Gastrocnemius medialis (tissue), 4 donors: ENCODE measurements at regions of chr6 and their contacts with region 1.

Region 1: DNA sequence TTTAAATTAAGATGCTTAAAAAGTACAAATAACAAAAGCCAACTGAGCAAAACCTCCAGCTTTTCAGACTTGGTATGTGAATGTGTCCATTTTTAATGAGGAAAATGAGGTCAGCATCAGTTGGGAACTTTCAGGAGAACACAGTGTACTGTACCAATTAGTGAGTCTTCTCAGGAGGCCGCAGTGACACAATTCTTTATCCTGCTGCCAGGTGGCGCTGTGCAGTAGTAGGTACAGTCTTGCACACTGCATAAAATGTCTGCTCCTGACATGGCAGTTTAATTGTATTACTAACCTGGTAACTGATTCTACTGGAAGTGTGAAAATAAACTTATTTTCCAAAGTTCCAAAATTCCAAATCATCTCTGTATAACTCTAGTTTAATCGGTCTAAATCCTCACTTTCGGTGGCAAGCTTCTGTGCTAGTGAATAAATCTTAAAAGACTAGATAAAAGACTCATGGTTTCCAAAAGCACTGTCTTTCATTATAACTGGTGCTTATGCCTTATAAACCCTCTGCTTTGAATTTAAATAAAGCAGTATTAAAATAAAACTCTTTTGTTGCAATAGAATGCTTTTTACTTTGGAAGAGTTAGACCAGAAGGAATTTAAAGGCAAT is 214.8 kb upstream of the MMS22L start:
- DNase-seq: peak; percentile 8 to 50
- ATAC-seq: peak; percentile 79 to 93
- H3K4me3 ChIP-seq: no peak overlapping the region
- H3K27ac ChIP-seq: no peak overlapping the region
- H3K4me1 ChIP-seq: peaks cover 0 to 4% of the 10 kb centered on the region in 2 donors
- H3K27me3 ChIP-seq: peaks cover 0 to 2% (median 0%) of the 10 kb centered on the region in 3 donors
- CTCF ChIP-seq: peak; percentile 33 to 78 (median 67)
- POLR2A ChIP-seq: no peak

Region 2: DNA sequence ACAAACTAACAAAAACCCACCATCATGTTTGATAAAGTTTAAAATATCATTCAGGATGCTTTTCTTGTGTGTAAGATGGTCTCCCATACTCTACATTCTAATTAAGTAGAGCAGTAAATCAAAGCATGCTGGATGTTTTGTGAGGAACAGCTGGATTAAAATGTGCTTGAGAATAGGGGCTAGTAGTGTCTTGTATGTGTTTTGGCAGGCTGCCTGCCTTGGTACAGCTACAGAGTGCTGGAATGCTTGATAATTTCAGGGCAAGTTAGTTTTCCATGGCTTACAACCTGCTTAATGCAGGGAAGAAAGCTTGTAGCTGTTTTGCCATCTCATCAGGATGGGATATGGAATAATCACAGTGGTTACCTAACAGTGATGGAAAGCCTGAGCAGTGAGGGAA is 421.8 kb after region 1 on chr6:
- in situ Hi-C with region 1: no loop called
- intact Hi-C with region 1: no loop called
- DNase-seq: no peak
- ATAC-seq: no peak
- H3K4me3 ChIP-seq: no peak overlapping the region
- H3K27ac ChIP-seq: no peak overlapping the region
- H3K4me1 ChIP-seq: no peaks in the 10 kb centered on the region
- H3K27me3 ChIP-seq: no peaks in the 10 kb centered on the region
- CTCF ChIP-seq: no peak
- POLR2A ChIP-seq: no peak

Region 3: GRCh38 chr6:98039869-98040607 is 542.2 kb after region 1 on chr6:
- in situ Hi-C with region 1: no loop called
- intact Hi-C with region 1: loop called (anchors 10 kb)
- DNase-seq: no peak
- ATAC-seq: no peak
- H3K4me3 ChIP-seq: no peak overlapping the region
- H3K27ac ChIP-seq: no peak overlapping the region
- H3K4me1 ChIP-seq: no peaks in the 10 kb centered on the region
- H3K27me3 ChIP-seq: no peaks in the 10 kb centered on the region
- CTCF ChIP-seq: no peak
- POLR2A ChIP-seq: no peak

Region 4: GRCh38 chr6:98845211-98846020 is 1347.6 kb after region 1 on chr6:
- in situ Hi-C with region 1: loop called in 1 of 4 experiments (anchors 25 kb)
- intact Hi-C with region 1: no loop called
- DNase-seq: peak in 1 of 2 donors; percentile 47
- ATAC-seq: peak in 1 of 2 donors; percentile 69
- H3K4me3 ChIP-seq: peak overlapping the region in 3 of 4 donors; percentile 14 to 39 (median 34)
- H3K27ac ChIP-seq: no peak overlapping the region
- H3K4me1 ChIP-seq: peaks cover 9 to 19% of the 10 kb centered on the region in 2 donors
- H3K27me3 ChIP-seq: peaks cover 92 to 93% (median 93%) of the 10 kb centered on the region in 3 donors
- CTCF ChIP-seq: peak; percentile 36 to 76 (median 65)
- POLR2A ChIP-seq: no peak

Region 5: DNA sequence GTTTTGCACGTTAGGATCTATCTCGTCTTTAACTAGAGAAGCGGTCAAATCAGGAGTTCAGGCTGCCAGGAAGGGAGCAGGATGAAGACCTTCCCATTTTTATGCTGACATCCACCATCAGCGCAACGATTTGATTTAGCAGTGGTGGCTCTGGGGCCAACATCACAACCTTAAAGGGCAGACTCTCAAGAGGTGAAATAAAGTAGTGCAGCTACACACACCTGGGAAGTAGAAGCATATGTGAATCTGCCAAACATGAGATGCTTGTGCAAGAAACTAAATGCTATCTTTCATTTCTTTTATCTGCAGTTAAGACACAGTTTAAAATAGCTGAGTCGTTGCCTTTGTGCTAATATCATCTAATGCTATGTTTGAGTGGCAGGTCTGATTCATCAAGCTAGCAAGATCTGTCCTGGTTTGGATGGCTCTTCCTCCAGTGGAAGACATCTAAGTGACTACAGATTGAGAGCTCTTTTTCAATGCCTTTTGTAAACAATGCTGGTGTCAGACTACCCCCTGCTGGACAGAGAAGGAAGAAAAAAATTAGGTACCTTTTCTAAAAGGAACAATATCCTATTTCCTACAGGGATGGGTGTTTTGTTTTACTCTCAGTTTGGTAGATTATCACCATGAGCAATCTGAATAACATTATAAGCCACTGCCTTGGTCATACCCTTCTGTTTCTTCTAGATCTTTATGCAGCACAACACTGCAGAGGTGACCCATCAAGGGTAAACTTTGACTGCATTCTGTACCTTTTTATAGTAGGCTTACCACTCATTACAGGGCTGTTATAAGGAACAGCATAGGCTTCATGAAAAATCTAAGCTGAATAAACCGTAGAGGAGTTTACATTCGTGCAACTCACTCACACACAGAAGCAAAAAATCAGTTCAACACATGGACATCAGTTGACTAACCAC is 1621.5 kb after region 1 on chr6:
- in situ Hi-C with region 1: loop called in 1 of 4 experiments (anchors 25 kb)
- intact Hi-C with region 1: no loop called
- DNase-seq: no peak
- ATAC-seq: peak in 1 of 2 donors; percentile 36
- H3K4me3 ChIP-seq: no peak overlapping the region
- H3K27ac ChIP-seq: no peak overlapping the region
- H3K4me1 ChIP-seq: no peaks in the 10 kb centered on the region
- H3K27me3 ChIP-seq: no peaks in the 10 kb centered on the region
- CTCF ChIP-seq: peak; percentile 8 to 74 (median 52)
- POLR2A ChIP-seq: no peak